MCF 10A (cell line): ENCODE measurements at regions of chr6 and their contacts with region 1.

Region 1: GRCh38 chr6:32843979-32844838 is at the start of gene PSMB8:
- DNase-seq: peak; percentile 98
- H3K4me3 Mint-ChIP-seq: peak within 1 kb of the TSS; percentile 99
- H3K27ac Mint-ChIP-seq: peak within 1 kb of the TSS; percentile 96
- H3K4me1 Mint-ChIP-seq: peaks cover 30% of the 10 kb centered on the region
- H3K27me3 Mint-ChIP-seq: no peaks in the 10 kb centered on the region
- CTCF ChIP-seq: no peak
- total RNA-seq, gene PSMB8: 34.1 and 47.3 TPM in 2 replicates

Region 2: DNA sequence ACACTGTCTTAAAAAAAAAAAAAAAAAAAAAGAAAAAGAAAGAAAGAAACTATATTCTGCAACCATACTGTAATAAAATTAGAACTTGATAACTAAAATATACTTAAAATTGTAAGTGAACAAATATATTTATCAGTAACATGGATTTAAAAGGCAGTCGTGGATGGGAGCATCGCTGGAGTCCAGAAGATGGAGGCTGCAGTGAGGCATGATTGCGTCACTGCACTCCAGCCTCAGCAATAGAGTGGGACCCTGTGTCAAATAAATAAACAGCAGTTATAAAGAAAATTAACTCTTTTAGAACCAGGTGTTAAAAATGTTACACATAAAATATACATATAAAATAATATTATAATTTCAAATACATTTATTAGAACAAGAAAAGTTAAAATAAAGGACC is 18.5 kb after region 1 on chr6:
- CTCF ChIA-PET with region 1: interaction called, 110 read pairs
- POLR2A ChIA-PET with region 1: interaction called, 111 read pairs
- intact Hi-C with region 1: no loop called
- DNase-seq: no peak
- H3K4me3 Mint-ChIP-seq: no peak overlapping the region
- H3K27ac Mint-ChIP-seq: no peak overlapping the region
- H3K4me1 Mint-ChIP-seq: peaks cover 14% of the 10 kb centered on the region
- H3K27me3 Mint-ChIP-seq: no peaks in the 10 kb centered on the region
- CTCF ChIP-seq: no peak

Region 3: GRCh38 chr6:33192671-33193602 is 348.7 kb after region 1 on chr6:
- CTCF ChIA-PET with region 1: no interaction called
- POLR2A ChIA-PET with region 1: no interaction called
- intact Hi-C with region 1: no loop called
- DNase-seq: no peak
- H3K4me3 Mint-ChIP-seq: no peak overlapping the region
- H3K27ac Mint-ChIP-seq: no peak overlapping the region
- H3K4me1 Mint-ChIP-seq: peaks cover 9% of the 10 kb centered on the region
- H3K27me3 Mint-ChIP-seq: no peaks in the 10 kb centered on the region
- CTCF ChIP-seq: no peak